ENCODE measurements at regions of chrX and their contacts with region 1.

Region 1: DNA sequence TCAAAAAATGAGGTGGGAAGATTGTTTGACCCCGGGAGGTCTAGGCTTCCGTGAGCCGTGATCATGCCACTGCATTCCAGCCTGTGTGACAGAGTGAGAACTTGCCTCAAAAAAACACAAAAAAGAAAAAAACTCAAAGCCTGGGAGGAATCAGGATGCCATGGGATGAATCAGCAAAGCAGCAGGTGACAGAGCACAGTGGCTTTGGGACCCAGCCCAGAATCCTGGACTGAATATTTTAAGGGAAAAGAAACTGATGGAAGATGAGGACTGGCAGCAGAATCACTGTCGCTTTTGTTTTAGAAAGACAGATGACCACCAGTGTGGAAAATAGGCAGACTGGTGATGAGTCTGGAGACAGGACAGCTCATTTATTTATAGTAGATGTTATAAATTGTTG is 16.6 kb downstream of the S100G start:
- DNase-seq: no peak
- H3K4me3 ChIP-seq: no peak overlapping the region
- H3K27ac ChIP-seq: no peak overlapping the region
- H3K4me1 ChIP-seq: no peaks in the 10 kb centered on the region
- H3K27me3 ChIP-seq: no peaks in the 10 kb centered on the region
- CTCF ChIP-seq: no peak

Region 2: GRCh38 chrX:16436348-16437188 is 230.0 kb before region 1 on chrX:
- intact Hi-C with region 1: loop called (anchors 5 kb)
- DNase-seq: peak; percentile 84
- H3K4me3 ChIP-seq: no peak overlapping the region
- H3K27ac ChIP-seq: no peak overlapping the region
- H3K4me1 ChIP-seq: no peaks in the 10 kb centered on the region
- H3K27me3 ChIP-seq: no peaks in the 10 kb centered on the region
- CTCF ChIP-seq: peak; percentile 43